GM12878 (cell line): ENCODE measurements at regions of chr20 and their contacts with region 1.

Region 1: GRCh38 chr20:5788385-5788895 is 38.2 kb downstream of the SHLD1 start:
- DNase-seq: peak; percentile 66
- ATAC-seq: peak; percentile 100
- H3K4me3 ChIP-seq: no peak overlapping the region
- H3K27ac ChIP-seq: no peak overlapping the region
- H3K4me1 ChIP-seq: no peaks in the 10 kb centered on the region
- H3K27me3 ChIP-seq: no peaks in the 10 kb centered on the region
- CTCF ChIP-seq: peak; percentile 76 to 93 (median 87); a peak in 5 of 6 replicates
- EP300 ChIP-seq: no peak
- POLR2A ChIP-seq: no peak
- RAD21 ChIP-seq: peak; percentile 98

Region 2: DNA sequence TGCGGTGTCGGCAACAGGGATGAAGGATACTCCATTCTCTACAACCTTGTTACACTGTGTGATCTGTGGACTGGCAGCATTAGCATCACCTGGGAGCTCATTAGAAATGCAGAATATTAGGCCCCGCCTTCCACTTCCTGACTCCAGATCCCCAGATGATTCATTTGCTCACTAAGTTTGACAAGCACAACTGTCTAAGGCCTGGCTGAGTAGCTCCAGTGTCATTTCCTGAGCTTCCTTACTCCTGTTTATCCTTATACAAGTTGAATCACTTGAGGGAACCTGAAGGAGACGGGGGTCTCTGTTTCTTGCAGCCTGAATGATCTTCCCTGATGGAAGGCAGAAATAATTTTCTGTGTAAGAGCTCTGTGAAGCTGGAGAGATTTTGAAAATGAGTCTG is 439.0 kb before region 1 on chr20:
- CTCF ChIA-PET with region 1: no interaction called
- POLR2A ChIA-PET with region 1: no interaction called
- RAD21 ChIA-PET with region 1: no interaction called
- SMC1A ChIA-PET with region 1: no interaction called
- in situ Hi-C with region 1: no loop called
- intact Hi-C with region 1: no loop called
- DNase-seq: no peak
- ATAC-seq: no peak
- H3K4me3 ChIP-seq: no peak overlapping the region
- H3K27ac ChIP-seq: no peak overlapping the region
- H3K4me1 ChIP-seq: no peaks in the 10 kb centered on the region
- H3K27me3 ChIP-seq: no peaks in the 10 kb centered on the region
- CTCF ChIP-seq: no peak
- EP300 ChIP-seq: no peak
- POLR2A ChIP-seq: no peak
- RAD21 ChIP-seq: no peak

Region 3: DNA sequence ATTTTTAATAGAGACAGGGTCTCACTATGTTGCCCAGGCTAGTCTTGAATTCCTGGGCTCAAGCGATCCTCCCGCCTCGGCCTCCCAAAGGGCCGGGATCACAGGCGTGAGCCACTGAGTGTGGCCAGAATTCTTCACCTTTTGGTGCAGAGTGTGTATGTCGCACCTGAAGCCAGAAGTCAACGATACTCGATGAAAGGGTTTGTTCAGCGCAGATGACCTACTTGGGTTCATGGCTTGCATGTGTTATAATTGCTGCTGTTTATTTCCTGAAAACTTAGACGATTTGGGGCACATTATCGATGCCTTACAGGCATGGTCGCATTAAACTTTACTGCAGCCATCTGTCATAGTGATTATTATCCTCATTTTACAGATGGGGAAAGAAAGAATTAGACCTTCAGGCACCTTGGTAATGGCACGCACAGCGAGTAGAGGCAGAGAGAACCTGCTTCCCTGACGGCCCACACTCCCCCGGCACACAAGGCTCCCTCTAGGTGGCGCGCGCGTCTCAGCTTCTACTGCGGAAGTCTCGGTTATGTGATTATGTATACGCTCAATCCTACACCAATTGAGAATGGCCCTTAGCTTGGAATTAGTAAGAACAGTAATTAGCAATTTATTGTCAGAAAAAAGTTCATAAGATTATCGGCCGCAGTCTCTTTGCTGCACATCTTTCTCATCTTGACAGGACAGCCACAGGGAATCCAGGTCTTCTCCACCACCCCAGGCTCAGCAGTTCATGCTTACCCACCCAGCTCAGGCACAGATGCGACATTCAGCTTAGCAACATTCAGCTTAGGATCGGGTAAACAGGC is 258.9 kb before region 1 on chr20:
- CTCF ChIA-PET with region 1: interaction called, 180 read pairs
- POLR2A ChIA-PET with region 1: interaction called, 4 read pairs
- RAD21 ChIA-PET with region 1: interaction called, 97 read pairs
- SMC1A ChIA-PET with region 1: interaction called, 57 read pairs
- in situ Hi-C with region 1: no loop called
- intact Hi-C with region 1: loop called (anchors 1 kb)
- DNase-seq: peak; percentile 26
- ATAC-seq: peak; percentile 96
- H3K4me3 ChIP-seq: no peak overlapping the region
- H3K27ac ChIP-seq: no peak overlapping the region
- H3K4me1 ChIP-seq: peaks cover 3% of the 10 kb centered on the region; the same call in 1 of the 2 replicates
- H3K27me3 ChIP-seq: no peaks in the 10 kb centered on the region
- CTCF ChIP-seq: peak; percentile 93 to 97 (median 93)
- EP300 ChIP-seq: no peak
- POLR2A ChIP-seq: no peak
- RAD21 ChIP-seq: peak; percentile 92

Region 4: DNA sequence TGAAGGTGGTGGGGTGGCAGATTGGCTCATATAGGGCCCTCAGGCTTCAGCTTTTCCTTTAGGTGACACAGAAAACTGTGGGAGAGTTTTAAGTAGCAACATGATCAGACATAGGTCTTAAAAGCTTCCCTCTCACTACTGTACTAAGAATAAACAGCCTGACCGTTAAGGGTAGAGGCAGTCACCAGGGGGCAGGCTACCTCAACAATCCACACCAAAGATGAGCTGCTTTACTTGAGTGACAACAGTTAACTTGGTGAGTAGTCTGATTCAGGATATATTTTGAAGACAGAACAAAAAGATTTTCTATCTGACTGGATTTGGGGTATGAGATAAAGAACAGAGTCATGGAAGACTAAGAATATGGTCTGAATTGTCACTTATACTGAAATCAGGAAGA is 231.3 kb before region 1 on chr20:
- CTCF ChIA-PET with region 1: interaction called, 36 read pairs
- POLR2A ChIA-PET with region 1: interaction called, 5 read pairs
- RAD21 ChIA-PET with region 1: interaction called, 22 read pairs
- SMC1A ChIA-PET with region 1: interaction called, 30 read pairs
- in situ Hi-C with region 1: no loop called
- intact Hi-C with region 1: loop called (anchors 1 kb)
- DNase-seq: peak; percentile 15
- ATAC-seq: peak; percentile 85
- H3K4me3 ChIP-seq: no peak overlapping the region
- H3K27ac ChIP-seq: no peak overlapping the region; the same call in 1 of the 2 replicates
- H3K4me1 ChIP-seq: no peaks in the 10 kb centered on the region
- H3K27me3 ChIP-seq: no peaks in the 10 kb centered on the region
- CTCF ChIP-seq: peak; percentile 52 to 71 (median 65); a peak in 5 of 6 replicates
- EP300 ChIP-seq: no peak
- POLR2A ChIP-seq: no peak
- RAD21 ChIP-seq: peak; percentile 75

Region 5: DNA sequence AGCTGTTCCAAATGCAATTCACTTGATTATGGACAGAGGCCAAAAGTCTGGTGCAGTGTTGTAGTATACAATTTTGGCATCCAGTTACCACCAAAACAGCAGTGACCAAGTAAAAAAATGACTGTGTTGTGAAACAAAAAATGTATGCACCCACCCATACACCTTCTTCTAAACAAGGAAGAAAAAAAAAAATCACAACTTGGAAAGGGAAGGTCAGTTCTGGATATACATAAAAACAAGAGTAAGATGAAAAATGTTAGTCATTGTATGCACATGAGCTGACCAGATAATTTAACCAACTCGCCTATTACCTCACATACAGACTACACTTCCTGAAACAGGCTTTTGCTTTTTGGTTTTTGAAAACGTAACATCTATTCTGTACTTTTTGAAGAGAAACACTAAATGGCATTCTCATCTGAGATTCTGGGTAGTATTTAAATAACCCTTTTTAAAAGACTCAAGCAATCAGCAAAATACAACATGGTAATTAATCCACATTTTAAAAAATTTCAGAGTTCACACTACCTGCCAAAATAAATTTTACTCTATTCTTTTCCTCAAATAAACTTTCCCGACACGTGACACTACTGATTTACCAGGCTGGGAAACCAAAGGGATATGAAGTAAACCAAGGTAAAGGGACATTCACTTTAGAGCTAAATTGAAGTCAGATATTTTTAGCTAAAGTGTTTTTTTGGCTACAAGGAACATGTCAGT is 179.8 kb before region 1 on chr20:
- CTCF ChIA-PET with region 1: interaction called, 11 read pairs
- POLR2A ChIA-PET with region 1: interaction called, 5 read pairs
- RAD21 ChIA-PET with region 1: interaction called, 3 read pairs
- SMC1A ChIA-PET with region 1: interaction called, 11 read pairs
- in situ Hi-C with region 1: no loop called
- intact Hi-C with region 1: no loop called
- DNase-seq: no peak
- ATAC-seq: peak; percentile 15
- H3K4me3 ChIP-seq: peak overlapping the region; percentile 87
- H3K27ac ChIP-seq: peak overlapping the region; percentile 98
- H3K4me1 ChIP-seq: peaks cover 5% of the 10 kb centered on the region; the same call in 1 of the 2 replicates
- H3K27me3 ChIP-seq: no peaks in the 10 kb centered on the region
- CTCF ChIP-seq: no peak
- EP300 ChIP-seq: no peak
- POLR2A ChIP-seq: no peak
- RAD21 ChIP-seq: no peak

Region 6: GRCh38 chr20:5658912-5659345 is 129.5 kb before region 1 on chr20:
- CTCF ChIA-PET with region 1: interaction called, 3 read pairs
- POLR2A ChIA-PET with region 1: no interaction called
- RAD21 ChIA-PET with region 1: interaction called, 16 read pairs
- SMC1A ChIA-PET with region 1: interaction called, 18 read pairs
- in situ Hi-C with region 1: no loop called
- intact Hi-C with region 1: no loop called
- DNase-seq: no peak
- ATAC-seq: peak; percentile 67
- H3K4me3 ChIP-seq: no peak overlapping the region
- H3K27ac ChIP-seq: no peak overlapping the region
- H3K4me1 ChIP-seq: peaks cover 23% of the 10 kb centered on the region
- H3K27me3 ChIP-seq: no peaks in the 10 kb centered on the region
- CTCF ChIP-seq: no peak
- EP300 ChIP-seq: no peak
- POLR2A ChIP-seq: no peak
- RAD21 ChIP-seq: no peak

Region 7: GRCh38 chr20:5933802-5934436 is 145.5 kb after region 1 on chr20:
- CTCF ChIA-PET with region 1: interaction called, 7 read pairs
- POLR2A ChIA-PET with region 1: no interaction called
- RAD21 ChIA-PET with region 1: interaction called, 7 read pairs
- SMC1A ChIA-PET with region 1: interaction called, 27 read pairs
- in situ Hi-C with region 1: no loop called
- intact Hi-C with region 1: no loop called
- DNase-seq: peak; percentile 26
- ATAC-seq: peak; percentile 94
- H3K4me3 ChIP-seq: no peak overlapping the region
- H3K27ac ChIP-seq: no peak overlapping the region
- H3K4me1 ChIP-seq: no peaks in the 10 kb centered on the region
- H3K27me3 ChIP-seq: 0 out of 4 replicates have a peak, but pooled peaks cover 0 to 1% of the 10 kb centered on the region in 2 experiments
- CTCF ChIP-seq: peak; percentile 35 to 61 (median 43); a peak in 4 of 6 replicates
- EP300 ChIP-seq: no peak
- POLR2A ChIP-seq: no peak
- RAD21 ChIP-seq: peak; percentile 67